ENCODE measurements at regions of chr10 and their contacts with region 1.

Region 1: DNA sequence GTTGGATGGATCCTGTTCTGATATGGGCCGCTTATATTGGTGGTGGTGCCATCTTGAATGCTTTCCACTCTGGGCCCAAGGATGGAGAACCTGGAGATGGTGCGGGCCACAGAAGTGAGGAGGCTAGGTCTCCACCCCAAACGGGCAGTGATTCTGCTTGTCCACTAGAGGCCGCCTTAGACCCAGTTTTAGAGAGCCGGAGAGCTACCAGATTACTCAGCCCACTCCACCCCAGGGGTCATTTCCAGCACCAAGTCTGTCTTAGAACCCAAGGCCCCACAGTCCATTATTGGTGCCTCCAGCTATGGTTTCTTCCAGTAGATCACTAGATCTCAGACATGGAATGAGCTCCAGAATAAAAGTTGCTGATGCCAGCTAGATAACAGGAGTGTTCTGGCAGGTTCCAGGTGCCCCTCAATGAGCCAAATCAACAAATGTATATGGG is 11.8 kb upstream of the CAMK2G start:
- DNase-seq: peak; percentile 82
- ATAC-seq: peak; percentile 92
- H3K4me3 Mint-ChIP-seq: no peak overlapping the region
- H3K27ac Mint-ChIP-seq: no peak overlapping the region
- H3K4me1 Mint-ChIP-seq: peaks cover 9% of the 10 kb centered on the region
- H3K27me3 Mint-ChIP-seq: no peaks in the 10 kb centered on the region

Region 2: DNA sequence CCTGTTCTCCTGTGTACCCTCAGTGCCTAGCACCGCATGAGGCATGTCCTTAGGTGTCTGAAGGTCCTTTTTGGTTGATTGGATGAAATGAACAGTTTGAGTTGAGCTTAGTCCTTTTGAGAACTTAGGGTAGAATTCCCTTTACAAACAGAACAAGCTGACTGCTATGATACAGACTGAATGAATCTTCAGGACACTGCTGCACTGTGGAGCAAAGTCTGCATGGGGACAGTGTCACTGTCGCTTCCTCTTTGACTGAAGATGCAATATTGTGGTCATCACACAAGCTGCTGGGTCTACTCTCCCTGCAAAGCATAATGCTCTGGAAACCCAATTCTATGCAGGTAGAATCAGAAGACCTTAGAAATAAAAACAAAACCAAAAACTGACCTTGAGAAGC is 16.2 kb after region 1 on chr10:
- CTCF ChIA-PET with region 1: interaction called, 14 read pairs
- POLR2A ChIA-PET with region 1: interaction called, 5 read pairs
- intact Hi-C with region 1: no loop called
- DNase-seq: no peak
- ATAC-seq: no peak
- H3K4me3 Mint-ChIP-seq: no peak overlapping the region
- H3K27ac Mint-ChIP-seq: no peak overlapping the region
- H3K4me1 Mint-ChIP-seq: no peaks in the 10 kb centered on the region
- H3K27me3 Mint-ChIP-seq: peaks cover 19% of the 10 kb centered on the region

Region 3: GRCh38 chr10:73908853-73909538 is 22.9 kb after region 1 on chr10:
- CTCF ChIA-PET with region 1: interaction called, 4 read pairs
- POLR2A ChIA-PET with region 1: interaction called, 5 read pairs
- intact Hi-C with region 1: loop called in 1 of 2 experiments (anchors 1 kb)
- DNase-seq: peak; percentile 72
- ATAC-seq: peak; percentile 76
- H3K4me3 Mint-ChIP-seq: peak overlapping the region; percentile 44
- H3K27ac Mint-ChIP-seq: peak overlapping the region; percentile 6
- H3K4me1 Mint-ChIP-seq: peaks cover 36% of the 10 kb centered on the region
- H3K27me3 Mint-ChIP-seq: peaks cover 46% of the 10 kb centered on the region

Region 4: DNA sequence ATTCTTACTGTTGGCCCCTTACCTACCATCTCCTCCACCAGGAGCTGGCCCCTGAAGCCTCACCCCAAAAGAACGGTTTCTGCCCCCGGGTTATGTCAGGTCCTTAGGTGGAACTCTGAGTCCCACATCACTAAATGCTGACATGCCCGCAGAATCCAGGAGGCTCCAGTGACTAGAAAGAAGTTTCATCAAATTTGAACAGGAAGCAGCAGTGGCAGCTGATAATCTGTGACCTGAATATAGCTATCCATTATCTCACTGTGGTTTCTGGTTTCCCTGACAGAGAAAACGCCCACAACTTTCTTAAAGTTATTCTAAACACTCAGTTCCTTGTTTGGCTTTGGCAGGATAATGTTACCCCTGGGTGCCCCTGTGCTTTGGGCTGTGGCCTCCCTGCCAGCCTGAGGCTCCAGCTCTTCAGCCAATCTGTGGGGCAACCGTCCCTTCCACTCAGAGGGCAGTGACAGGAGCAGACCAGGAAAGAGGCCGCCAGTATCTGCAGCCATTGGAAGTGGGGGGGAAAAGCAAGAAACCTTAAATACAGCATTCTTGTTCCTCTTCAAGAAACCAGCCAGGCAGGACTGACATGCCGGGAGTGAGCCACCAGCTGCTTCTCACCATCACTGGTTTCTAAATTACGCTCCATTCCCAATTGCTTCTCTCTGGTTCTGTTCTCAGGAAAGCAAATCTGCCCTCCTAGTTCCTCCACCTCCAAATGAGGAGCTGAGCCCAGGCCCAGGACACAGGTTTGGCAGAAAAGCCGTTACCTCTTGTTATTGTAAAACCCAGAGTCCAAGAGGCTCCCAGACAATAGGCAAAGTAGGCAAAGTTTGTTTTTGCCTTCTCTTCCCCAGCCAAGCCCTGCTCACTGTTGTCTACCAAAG is 70.6 kb after region 1 on chr10:
- CTCF ChIA-PET with region 1: interaction called, 19 read pairs
- POLR2A ChIA-PET with region 1: no interaction called
- intact Hi-C with region 1: no loop called
- DNase-seq: peak; percentile 44
- ATAC-seq: peak; percentile 66
- H3K4me3 Mint-ChIP-seq: peak overlapping the region; percentile 35
- H3K27ac Mint-ChIP-seq: peak overlapping the region; percentile 87
- H3K4me1 Mint-ChIP-seq: peaks cover 58% of the 10 kb centered on the region
- H3K27me3 Mint-ChIP-seq: no peaks in the 10 kb centered on the region

Region 5: GRCh38 chr10:74103560-74104248 is 217.6 kb after region 1 on chr10:
- CTCF ChIA-PET with region 1: interaction called, 4 read pairs
- POLR2A ChIA-PET with region 1: no interaction called
- intact Hi-C with region 1: loop called (anchors 1 kb)
- DNase-seq: no peak
- ATAC-seq: peak; percentile 42
- H3K4me3 Mint-ChIP-seq: no peak overlapping the region
- H3K27ac Mint-ChIP-seq: peak overlapping the region; percentile 34
- H3K4me1 Mint-ChIP-seq: no peaks in the 10 kb centered on the region
- H3K27me3 Mint-ChIP-seq: no peaks in the 10 kb centered on the region